ENCODE measurements at regions of chr5 and their contacts with region 1.

Region 1: GRCh38 chr5:39040875-39041274 is 33.3 kb downstream of the RICTOR start:
- DNase-seq: no peak
- ATAC-seq: no peak
- H3K4me3 Mint-ChIP-seq: no peak overlapping the region
- H3K27ac Mint-ChIP-seq: no peak overlapping the region
- H3K4me1 Mint-ChIP-seq: peaks cover 45% of the 10 kb centered on the region
- H3K27me3 Mint-ChIP-seq: no peaks in the 10 kb centered on the region
- CTCF ChIP-seq: no peak

Region 2: DNA sequence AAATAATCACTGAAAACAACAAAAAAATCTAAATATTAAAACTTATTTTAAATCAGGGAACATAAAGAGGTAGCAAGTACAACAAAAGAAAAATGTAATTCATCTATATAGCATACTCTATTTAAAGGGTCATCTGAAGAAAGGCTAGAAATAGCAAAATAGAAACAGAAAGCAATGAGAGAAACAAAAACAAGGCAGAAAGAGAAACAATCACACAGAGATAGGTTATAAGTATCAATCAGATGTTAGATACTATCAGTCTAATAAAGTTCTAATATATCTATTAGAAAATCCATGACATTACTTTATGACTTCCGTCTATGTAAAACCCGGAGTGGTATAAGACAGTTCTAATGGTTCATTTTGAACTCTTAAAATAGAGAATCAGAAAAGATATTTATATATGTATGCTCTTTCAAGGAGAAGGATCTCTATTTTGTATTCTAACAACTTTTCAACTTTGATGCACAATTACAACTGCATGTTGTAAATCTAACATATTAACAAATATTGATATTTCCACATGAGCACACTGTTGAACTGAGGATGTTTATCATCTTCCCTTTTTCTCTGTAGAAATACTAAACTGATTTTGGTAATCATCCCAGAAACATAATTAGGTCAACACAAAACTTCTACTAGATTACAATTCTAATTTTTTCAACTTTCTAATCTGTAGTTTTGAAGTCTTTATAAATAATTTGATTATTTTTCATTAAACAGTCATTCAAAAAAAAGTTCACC is 17.5 kb after region 1 on chr5:
- CTCF ChIA-PET with region 1: no interaction called
- POLR2A ChIA-PET with region 1: no interaction called
- intact Hi-C with region 1: loop called (anchors 2 kb)
- DNase-seq: no peak
- ATAC-seq: peak; percentile 28
- H3K4me3 Mint-ChIP-seq: peak overlapping the region; percentile 36
- H3K27ac Mint-ChIP-seq: peak overlapping the region; percentile 30
- H3K4me1 Mint-ChIP-seq: peaks cover 53% of the 10 kb centered on the region
- H3K27me3 Mint-ChIP-seq: no peaks in the 10 kb centered on the region
- CTCF ChIP-seq: no peak